Activated T-helper 2 cell treated with anti-CD3 and anti-CD28 coated beads, Interferon-gamma antibody, Interleukin-2, Interleukin-4, amounts not matched to agents 10 μg/mL and 5 μg/mL and 100 μg/mL, durations not matched to agents 14 hours and 24 hours and 36 hours (primary cell): ENCODE measurements at regions of chr5 and their contacts with region 1.

Region 1: GRCh38 chr5:131796793-131797693 is at the start of gene FNIP1:
- DNase-seq: peak; percentile 99
- H3K4me3 Mint-ChIP-seq: peak within 1 kb of the TSS; percentile 97
- H3K27ac Mint-ChIP-seq: peak within 1 kb of the TSS; percentile 91
- H3K4me1 Mint-ChIP-seq: peaks cover 28% of the 10 kb centered on the region
- H3K27me3 Mint-ChIP-seq: peaks cover 8% of the 10 kb centered on the region
- total RNA-seq, gene FNIP1: 18.1 and 18.8 TPM in 2 replicates

Region 2: DNA sequence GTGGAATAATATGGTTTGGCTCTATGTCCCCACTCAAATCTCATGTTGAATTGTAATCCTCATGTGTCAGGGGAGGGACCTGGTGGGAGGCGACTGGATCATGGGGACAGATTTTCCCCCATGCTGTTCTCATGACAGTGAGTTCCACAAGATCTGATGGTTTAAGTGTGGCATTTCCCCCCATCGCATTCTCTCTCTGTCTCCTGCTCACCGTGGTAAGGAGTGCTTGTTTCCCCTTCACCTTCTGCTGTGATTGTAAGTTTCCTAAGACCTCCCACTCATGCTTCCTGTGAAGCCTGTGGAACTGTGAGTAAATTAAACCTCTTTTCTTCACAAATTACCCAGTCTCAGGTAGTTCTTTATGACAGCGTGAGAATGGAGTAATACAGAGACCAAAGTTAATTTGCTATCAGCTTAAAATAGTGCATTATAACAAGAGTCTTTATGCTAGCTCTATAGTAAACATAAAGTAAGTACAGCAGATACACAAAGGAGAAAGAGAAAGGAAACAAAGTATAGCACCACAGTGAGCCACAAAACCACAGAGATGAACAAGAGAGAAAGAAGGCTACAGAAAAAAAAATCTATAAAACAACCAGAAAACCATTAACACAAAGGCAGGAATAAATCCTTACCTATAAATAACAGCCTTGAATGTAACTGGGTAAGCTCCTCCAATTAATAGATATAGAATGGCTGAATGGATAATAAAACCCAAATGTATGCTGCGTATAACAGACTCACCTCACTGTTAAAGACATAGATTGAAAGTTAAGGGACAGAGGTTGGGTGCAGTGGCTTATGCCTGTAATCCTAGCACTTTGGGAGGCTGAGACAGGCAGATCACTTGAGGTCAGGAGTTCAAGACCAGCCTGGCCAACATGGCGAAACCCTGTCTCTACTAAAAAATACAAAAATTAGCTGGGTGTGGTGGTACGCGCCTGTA is 201.7 kb before region 1 on chr5:
- intact Hi-C with region 1: loop called (anchors 2 kb)
- DNase-seq: no peak
- H3K4me3 Mint-ChIP-seq: peak overlapping the region; percentile 68
- H3K27ac Mint-ChIP-seq: peak overlapping the region; percentile 87
- H3K4me1 Mint-ChIP-seq: peaks cover 41% of the 10 kb centered on the region
- H3K27me3 Mint-ChIP-seq: no peaks in the 10 kb centered on the region

Region 3: DNA sequence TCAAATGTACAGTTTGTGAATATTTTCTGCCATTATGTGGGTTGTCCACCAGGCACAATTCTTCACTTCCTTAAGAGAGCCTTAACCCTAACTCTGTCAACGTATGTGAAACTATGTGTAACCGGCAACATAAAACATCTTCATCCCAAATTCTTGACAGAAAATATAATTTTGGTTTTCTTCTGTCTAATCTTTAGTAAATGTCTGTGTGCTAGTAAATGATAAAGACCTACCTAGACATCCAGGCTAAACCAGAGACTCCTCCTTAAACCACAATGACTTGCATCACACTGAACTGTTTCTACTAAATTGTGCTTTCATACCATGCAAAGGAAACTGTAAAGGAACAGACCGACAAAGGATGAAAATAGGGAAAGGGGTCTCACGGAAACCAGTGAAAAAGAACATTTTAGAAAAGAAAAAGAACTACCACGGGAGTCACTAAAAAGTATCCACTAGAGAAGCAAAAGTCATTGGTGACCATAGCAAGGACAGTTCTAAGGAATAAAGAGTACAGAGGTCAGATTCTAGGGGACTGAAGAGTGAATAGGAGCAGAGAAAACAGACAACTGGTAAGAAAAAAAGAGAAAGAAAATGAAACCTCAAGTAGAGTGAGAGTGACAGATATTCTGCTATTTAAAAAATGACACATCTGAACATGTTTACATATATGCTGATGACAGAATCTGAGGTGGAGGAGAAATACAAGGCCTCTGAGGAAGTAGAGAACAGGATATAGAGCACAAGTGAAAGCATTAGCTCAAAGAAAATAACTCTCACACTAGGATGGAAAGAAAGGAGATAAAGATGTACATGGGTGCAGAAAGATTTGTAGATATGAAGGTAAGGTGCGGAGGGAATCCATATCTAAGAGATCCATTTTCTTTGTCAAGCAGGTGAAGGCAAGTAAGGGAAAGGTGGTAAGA is 49.6 kb before region 1 on chr5:
- intact Hi-C with region 1: loop called (anchors 2 kb)
- DNase-seq: no peak
- H3K4me3 Mint-ChIP-seq: peak overlapping the region; percentile 61
- H3K27ac Mint-ChIP-seq: peak overlapping the region; percentile 88
- H3K4me1 Mint-ChIP-seq: peaks cover 40% of the 10 kb centered on the region
- H3K27me3 Mint-ChIP-seq: no peaks in the 10 kb centered on the region

Region 4: GRCh38 chr5:131825404-131826013 is 28.5 kb after region 1 on chr5:
- intact Hi-C with region 1: no loop called
- DNase-seq: no peak
- H3K4me3 Mint-ChIP-seq: no peak overlapping the region
- H3K27ac Mint-ChIP-seq: no peak overlapping the region
- H3K4me1 Mint-ChIP-seq: peaks cover 8% of the 10 kb centered on the region
- H3K27me3 Mint-ChIP-seq: peaks cover 21% of the 10 kb centered on the region